Psoas muscle (tissue), 8 donors: ENCODE measurements at regions of chr15 and their contacts with region 1.

Region 1: GRCh38 chr15:70569091-70569621 is 194.2 kb downstream of the UACA start:
- DNase-seq: no peak
- ATAC-seq: peak in 3 of 4 donors; percentile 50 to 71 (median 51)
- H3K4me3 ChIP-seq: no peak overlapping the region
- H3K27ac ChIP-seq: no peak overlapping the region
- H3K4me1 ChIP-seq: peaks cover 7% of the 10 kb centered on the region
- H3K27me3 ChIP-seq: no peaks in the 10 kb centered on the region
- CTCF ChIP-seq: peak; percentile 32

Region 2: DNA sequence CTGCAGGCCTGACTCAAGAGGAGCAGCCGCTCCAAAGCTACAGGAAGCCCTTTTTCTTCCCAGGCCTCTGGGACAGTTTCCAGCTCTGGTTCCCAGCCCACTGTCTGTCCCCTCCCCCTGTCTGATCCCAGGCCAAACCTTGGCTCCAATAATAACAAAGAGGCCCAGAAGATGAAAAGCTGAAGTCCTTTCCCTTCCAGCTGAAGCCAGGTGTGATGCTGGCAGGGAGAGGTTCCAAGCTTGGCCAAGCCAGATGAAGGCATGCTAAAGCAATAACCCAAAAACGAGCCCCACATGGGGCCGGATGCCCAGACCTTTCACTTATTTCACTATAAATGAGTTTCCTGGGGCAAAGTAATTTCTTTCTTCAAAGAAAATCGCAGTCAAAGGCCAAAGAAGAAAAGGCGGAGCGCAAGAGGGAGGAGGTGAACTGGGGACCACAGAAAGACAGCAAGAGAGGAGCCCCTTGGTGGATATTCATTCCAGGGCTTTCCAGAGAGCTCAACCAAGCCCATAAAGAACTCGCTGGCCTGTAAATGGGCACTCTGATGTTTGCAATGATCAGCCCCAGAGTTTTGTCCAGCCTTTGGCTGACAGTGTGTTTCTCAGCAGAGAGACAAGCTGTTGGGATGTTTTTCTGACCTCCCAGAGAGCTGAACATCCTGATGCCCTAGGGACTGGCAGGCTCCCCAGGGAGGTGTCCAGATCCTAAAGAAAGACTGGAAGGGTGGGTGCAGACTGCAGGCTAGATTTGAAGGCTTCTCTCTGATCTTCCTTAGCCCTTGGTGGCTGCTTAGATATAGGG is 36.7 kb after region 1 on chr15:
- intact Hi-C with region 1: loop called in 1 of 2 experiments (anchors 2 kb)
- DNase-seq: peak; percentile 53 to 71
- ATAC-seq: peak in 2 of 4 donors; percentile 37 to 43
- H3K4me3 ChIP-seq: no peak overlapping the region
- H3K27ac ChIP-seq: no peak overlapping the region
- H3K4me1 ChIP-seq: no peaks in the 10 kb centered on the region
- H3K27me3 ChIP-seq: no peaks in the 10 kb centered on the region
- CTCF ChIP-seq: no peak

Region 3: DNA sequence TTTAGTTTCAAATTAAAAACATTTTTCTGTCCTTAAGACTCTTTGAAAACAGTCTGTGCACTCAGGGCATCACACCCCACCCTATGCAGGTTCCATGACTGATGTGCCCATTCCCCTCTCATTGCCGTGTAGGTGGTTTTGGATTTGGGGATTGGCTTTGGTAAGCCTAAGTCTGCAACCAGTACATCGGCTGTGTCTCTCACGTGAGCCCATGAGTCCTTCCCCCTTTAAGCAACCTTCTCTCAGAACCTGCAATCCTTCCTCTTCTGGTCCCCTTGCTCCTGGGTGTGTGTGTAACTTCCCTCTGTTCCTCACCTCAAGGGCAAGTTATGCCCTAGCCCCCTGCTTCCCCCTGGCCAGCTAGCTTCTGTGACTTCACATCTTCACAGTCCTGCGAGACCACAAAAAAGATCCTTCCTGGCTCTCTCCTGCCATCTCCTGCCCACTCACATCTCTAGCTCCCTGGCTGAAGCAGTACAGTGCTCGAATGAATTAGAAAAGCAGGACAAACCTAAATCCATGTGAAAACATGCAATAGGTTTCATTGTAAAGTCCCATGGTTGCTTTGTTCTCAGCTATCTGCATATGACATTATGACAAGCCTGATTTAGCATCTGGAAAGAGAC is 67.5 kb after region 1 on chr15:
- intact Hi-C with region 1: loop called in 1 of 2 experiments (anchors 10 kb)
- DNase-seq: no peak
- ATAC-seq: no peak
- H3K4me3 ChIP-seq: no peak overlapping the region
- H3K27ac ChIP-seq: no peak overlapping the region
- H3K4me1 ChIP-seq: no peaks in the 10 kb centered on the region
- H3K27me3 ChIP-seq: no peaks in the 10 kb centered on the region
- CTCF ChIP-seq: no peak